Activated T-helper 2 cell treated with anti-CD3 and anti-CD28 coated beads, Interferon-gamma antibody, Interleukin-2, Interleukin-4, amounts not matched to agents 10 μg/mL and 5 μg/mL and 100 μg/mL, durations not matched to agents 14 hours and 24 hours and 36 hours (primary cell): ENCODE measurements at regions of chr3 and their contacts with region 1.

Region 1: GRCh38 chr3:50227390-50228183 is 8.4 kb upstream of the GNAI2 start:
- DNase-seq: peak; percentile 90
- H3K4me3 Mint-ChIP-seq: peak overlapping the region; percentile 89
- H3K27ac Mint-ChIP-seq: peak overlapping the region; percentile 78
- H3K4me1 Mint-ChIP-seq: peaks cover 17% of the 10 kb centered on the region
- H3K27me3 Mint-ChIP-seq: peaks cover 7% of the 10 kb centered on the region

Region 2: DNA sequence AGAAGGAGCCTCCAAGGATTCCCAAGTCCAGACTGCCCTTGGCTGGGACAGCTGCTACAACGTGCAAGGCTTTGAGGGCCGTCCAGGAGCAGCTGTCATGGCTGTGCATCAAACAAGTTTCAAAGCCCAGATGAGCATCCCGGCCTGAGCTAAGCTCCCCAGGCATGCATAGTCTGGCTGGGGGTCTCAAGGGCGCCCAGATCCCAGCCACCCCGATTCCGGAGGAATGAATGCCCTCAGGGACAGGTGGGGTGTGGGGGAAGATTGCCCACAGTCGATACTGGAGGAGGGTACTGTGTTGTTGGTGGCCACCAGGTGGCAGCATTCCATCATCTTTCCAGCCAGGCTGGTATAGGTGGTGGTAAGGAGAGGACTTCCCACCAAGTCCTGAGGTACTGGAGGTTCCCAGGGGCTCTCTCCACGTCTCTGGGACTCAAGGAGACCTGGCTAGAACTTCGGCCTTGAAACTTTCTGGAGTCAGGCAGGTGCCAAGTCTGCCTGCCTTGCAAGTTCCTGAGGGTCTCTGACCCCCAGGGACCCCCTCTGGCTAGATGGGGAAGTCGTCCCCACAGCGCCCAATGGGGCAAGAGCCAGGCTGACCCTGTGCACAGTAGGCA is 106.1 kb before region 1 on chr3:
- intact Hi-C with region 1: loop called (anchors 1 kb)
- DNase-seq: peak; percentile 55
- H3K4me3 Mint-ChIP-seq: no peak overlapping the region
- H3K27ac Mint-ChIP-seq: no peak overlapping the region
- H3K4me1 Mint-ChIP-seq: no peaks in the 10 kb centered on the region
- H3K27me3 Mint-ChIP-seq: no peaks in the 10 kb centered on the region

Region 3: DNA sequence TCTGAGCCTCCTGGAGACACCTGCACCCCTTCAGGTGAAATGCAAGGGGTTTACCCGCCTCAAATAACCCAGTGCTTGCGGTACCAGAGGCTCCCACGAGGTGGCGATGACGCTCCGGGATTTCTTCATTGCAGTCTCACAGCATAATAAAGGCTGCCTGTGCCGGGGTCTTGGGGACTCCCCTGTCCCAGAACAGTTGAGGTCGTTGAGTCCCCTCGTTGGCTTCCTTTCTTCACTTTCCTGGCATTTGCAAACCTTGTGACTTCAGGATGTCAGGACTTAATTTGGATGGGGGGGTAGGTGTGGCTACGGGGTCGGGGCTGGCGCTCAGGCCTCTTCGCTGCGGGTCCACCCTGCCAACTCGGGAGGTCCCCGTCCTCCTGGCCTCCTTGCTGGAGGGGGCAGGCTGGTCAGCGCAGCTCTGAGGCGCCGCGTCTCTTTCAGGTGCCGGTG is 34.9 kb before region 1 on chr3:
- intact Hi-C with region 1: loop called (anchors 1 kb)
- DNase-seq: peak; percentile 75
- H3K4me3 Mint-ChIP-seq: no peak overlapping the region
- H3K27ac Mint-ChIP-seq: no peak overlapping the region
- H3K4me1 Mint-ChIP-seq: peaks cover 2% of the 10 kb centered on the region
- H3K27me3 Mint-ChIP-seq: peaks cover 20% of the 10 kb centered on the region

Region 4: DNA sequence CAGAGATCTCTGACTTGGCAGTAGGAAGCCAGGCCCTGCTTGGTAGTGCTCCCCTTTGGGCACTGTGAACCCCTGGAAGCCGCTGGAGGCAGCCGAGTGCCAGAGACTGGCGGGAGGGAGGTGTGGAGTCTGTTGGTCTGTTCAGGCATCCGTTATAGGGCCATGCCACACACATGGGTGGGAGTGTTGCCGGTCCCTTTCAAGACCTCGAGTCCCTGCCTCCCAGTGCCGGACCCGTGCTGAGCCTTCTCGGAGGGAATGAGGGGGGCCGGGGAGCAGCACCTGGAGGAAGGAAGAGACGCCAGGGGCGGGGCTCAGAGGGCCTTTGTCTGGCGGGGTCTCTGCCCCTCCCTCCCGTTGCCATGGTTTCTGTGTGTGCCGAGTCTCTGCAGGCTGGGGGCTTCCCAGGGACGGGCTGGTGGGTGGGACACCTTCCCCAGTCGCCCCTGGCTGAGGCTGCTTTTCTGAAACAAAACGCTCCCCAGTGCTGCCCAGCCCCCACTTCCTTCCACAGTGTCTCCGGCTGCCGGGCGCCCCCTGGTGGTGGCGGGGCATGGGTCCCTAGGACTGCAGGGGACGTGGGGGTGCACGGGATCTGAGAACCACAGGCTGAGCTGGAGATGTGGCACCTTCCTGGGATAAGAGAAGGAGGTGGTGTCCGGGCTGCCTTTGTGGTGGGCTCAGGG is 18.4 kb after region 1 on chr3:
- intact Hi-C with region 1: loop called (anchors 1 kb)
- DNase-seq: peak; percentile 86
- H3K4me3 Mint-ChIP-seq: peak overlapping the region; percentile 82
- H3K27ac Mint-ChIP-seq: peak overlapping the region; percentile 92
- H3K4me1 Mint-ChIP-seq: peaks cover 62% of the 10 kb centered on the region
- H3K27me3 Mint-ChIP-seq: no peaks in the 10 kb centered on the region

Region 5: DNA sequence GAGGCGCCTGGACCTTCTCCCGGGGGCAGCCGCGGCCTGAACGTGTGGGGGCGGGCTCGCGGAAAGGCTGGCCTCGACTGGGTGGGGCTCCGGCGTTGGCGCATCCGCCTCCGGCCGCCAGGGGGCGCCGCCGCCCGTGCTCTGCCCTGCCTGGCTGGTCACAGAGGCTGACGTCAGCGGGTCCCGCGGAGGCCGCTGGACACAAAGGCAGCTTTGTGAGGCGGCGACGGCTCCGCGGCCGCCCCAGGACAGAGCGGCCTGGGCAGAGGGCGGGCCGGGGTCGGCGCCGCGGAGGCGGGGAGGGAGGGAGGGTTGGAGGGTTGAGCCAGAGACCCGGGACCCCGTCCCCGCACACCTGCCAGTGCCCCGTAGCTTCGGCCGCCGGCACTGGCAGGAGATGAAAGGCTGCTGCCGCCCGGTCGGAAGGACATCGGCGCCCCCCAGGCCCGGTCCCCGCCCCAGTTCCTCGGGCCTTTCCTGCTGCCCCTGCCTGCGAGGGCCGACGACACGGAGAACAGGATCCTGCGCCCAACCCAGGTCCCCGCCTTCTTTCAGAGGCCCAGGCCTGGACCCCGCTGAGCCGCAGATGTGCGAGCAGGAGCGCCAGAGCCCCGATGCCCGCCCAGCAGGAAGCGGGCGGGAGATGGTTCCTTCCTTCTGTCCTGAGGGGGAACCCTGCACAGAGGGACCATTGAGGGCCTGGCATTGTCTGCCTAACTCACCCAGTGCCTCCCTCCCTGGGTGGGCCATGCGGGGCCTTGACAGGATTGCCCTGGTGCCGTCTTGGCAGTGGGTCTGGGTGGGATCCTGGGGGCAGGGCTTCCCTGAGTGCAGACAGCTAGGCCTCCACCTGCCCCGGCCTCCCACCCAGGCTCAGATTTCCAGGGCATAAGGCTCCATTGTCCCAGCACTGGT is 32.7 kb after region 1 on chr3:
- intact Hi-C with region 1: loop called (anchors 1 kb)
- DNase-seq: peak; percentile 83
- H3K4me3 Mint-ChIP-seq: peak overlapping the region; percentile 69
- H3K27ac Mint-ChIP-seq: peak overlapping the region; percentile 67
- H3K4me1 Mint-ChIP-seq: peaks cover 3% of the 10 kb centered on the region
- H3K27me3 Mint-ChIP-seq: no peaks in the 10 kb centered on the region